IMR-90 (cell line): ENCODE measurements at regions of chr15 and their contacts with region 1.

Region 1: DNA sequence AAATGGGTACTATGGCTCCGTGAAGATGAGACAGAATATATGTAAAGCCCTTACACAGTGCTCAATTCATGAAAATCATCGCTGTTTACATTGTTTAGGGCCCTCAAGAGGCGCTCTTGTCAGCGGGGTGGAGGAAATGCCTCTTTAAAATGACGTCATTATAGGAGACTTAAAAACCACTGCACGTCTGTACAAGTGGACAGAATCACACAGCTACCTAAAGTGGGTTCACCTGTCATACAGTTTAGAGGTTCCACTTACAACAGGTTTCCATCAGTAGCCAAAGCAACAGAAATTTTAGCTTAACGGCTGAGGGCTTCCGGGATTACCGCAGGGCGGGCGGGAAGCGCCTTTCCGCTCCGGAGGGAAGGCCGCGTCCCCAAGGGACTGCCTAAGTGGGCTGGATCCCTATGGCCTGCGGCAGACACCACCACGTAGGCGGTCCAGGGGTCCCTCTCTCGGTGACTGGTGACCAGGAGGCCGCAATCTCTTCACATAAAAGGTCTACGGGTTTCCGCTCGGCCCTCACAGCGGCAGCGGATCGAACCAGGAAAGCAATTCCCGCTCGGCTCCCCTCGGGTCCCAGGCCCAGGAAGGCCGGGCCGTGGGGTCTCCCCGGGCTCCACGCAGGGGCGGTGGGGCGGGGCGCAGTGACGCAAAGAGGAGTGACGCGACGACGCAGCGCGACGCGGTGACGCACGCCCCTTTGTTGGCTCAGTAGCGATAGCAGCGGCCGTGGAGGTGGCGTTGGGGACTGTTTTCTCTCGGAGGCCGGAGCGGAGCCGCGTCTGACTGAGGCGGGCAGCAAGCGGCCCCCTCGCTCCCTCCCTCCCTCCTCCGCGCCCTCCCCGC is at the start of gene ARIH1:
- DNase-seq: peak; percentile 94
- ATAC-seq: peak; percentile 88
- H3K4me3 ChIP-seq: peak within 1 kb of the TSS; percentile 97
- H3K27ac ChIP-seq: peak within 1 kb of the TSS; percentile 98
- H3K4me1 ChIP-seq: peaks cover 2% of the 10 kb centered on the region
- H3K27me3 ChIP-seq: no peaks in the 10 kb centered on the region
- CTCF ChIP-seq: peak; percentile 53
- POLR2A ChIP-seq: peak; percentile 95
- RAD21 ChIP-seq: peak; percentile 45
- total RNA-seq, gene ARIH1: 41.2 and 41.9 TPM in 2 replicates

Region 2: GRCh38 chr15:72312605-72313447 is 161.0 kb before region 1 on chr15:
- CTCF ChIA-PET with region 1: interaction called, 3 read pairs
- POLR2A ChIA-PET with region 1: no interaction called
- dilution Hi-C with region 1: no loop called
- in situ Hi-C with region 1: no loop called
- intact Hi-C with region 1: loop called (anchors 1 kb)
- DNase-seq: peak; percentile 62
- ATAC-seq: peak; percentile 100
- H3K4me3 ChIP-seq: no peak overlapping the region
- H3K27ac ChIP-seq: no peak overlapping the region
- H3K4me1 ChIP-seq: no peaks in the 10 kb centered on the region
- H3K27me3 ChIP-seq: peaks cover 27% of the 10 kb centered on the region
- CTCF ChIP-seq: peak; percentile 82
- POLR2A ChIP-seq: no peak
- RAD21 ChIP-seq: peak; percentile 85

Region 3: DNA sequence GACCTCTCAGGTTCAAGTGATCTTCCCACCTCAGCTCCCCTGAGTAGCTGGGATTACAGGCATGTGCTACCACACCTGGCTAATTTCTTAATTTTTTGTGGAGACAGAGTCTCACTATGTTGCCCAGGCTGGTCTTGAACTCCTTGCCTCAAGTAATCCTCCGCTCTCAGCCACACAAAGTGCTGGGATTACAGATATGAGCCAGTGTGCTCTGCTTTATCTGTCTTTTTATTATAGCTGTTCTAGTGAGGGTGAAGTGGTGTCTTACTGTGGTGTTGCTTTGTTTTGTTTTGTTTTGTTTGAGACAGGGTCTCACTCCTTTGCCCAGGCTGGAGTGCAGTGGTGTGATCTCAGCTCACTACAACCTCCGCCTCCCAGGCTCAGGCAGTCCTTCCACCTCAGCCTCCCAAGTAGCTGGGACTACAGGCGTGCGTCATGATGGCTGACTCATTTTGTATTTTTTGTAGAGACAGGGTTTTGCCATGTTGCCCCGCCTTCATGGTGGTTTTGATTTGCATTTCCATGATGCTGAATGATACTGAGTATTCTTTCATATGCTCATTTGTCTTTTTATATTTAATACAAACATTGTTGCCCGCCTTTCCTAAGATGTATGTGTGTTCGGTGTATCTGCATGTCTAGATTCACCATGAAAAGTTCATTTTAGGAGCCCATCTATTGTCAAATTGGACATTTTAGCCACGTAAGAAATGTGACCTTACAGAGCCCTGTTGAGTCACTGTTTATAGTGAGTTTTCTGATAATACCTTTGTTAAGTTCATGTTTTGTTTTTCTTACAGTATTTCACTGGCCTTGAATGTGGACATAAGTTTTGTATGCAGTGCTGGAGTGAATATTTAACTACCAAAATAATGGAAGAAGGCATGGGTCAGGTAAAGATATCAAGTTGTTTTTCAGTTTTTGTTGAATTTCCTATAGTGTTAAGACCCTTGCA is 80.9 kb after region 1 on chr15:
- CTCF ChIA-PET with region 1: no interaction called
- POLR2A ChIA-PET with region 1: no interaction called
- dilution Hi-C with region 1: no loop called
- in situ Hi-C with region 1: no loop called
- intact Hi-C with region 1: no loop called
- DNase-seq: peak; percentile 84
- ATAC-seq: peak; percentile 70
- H3K4me3 ChIP-seq: no peak overlapping the region
- H3K27ac ChIP-seq: no peak overlapping the region
- H3K4me1 ChIP-seq: peaks cover 5% of the 10 kb centered on the region; the same call in 1 of the 2 replicates
- H3K27me3 ChIP-seq: no peaks in the 10 kb centered on the region
- CTCF ChIP-seq: no peak
- POLR2A ChIP-seq: no peak
- RAD21 ChIP-seq: no peak